ENCODE measurements at regions of chr3 and their contacts with region 1.

Region 1: DNA sequence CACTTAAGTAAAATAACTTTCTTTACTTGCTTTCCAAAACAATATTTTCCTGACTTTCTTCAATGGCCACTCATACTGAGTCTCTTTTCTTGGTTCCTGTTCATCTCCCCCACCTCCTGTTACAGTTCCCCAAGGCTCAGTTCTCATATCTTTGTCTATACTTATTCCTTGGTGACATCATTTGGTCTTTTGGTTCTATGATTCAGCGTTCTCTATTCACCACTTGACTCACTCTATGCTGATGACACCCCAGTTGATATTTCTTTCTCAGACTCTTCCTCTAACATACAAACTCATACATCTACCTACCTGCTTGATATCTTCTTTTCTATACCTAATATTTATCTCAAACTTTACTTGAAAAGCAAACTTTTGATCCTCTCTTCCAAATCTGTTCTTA is 85.0 kb upstream of the P3H2 start:
- DNase-seq: peak in 2 of 3 donors; percentile 13 to 17
- H3K4me3 ChIP-seq: no peak overlapping the region
- H3K27ac ChIP-seq: no peak overlapping the region
- H3K4me1 ChIP-seq: peaks cover 0 to 4% (median 0%) of the 10 kb centered on the region in 4 experiments
- H3K27me3 ChIP-seq: peaks cover 0 to 3% (median 1%) of the 10 kb centered on the region in 5 experiments

Region 2: GRCh38 chr3:189967254-189967865 is 238.4 kb before region 1 on chr3:
- CTCF ChIA-PET with region 1: interaction called, 26 read pairs
- POLR2A ChIA-PET with region 1: no interaction called
- DNase-seq: peak; percentile 47 to 74 (median 67)
- H3K4me3 ChIP-seq: no peak overlapping the region
- H3K27ac ChIP-seq: no peak overlapping the region
- H3K4me1 ChIP-seq: peaks cover 0 to 6% (median 0%) of the 10 kb centered on the region in 4 experiments
- H3K27me3 ChIP-seq: no peaks in the 10 kb centered on the region

Region 3: GRCh38 chr3:190026154-190026553 is 179.6 kb before region 1 on chr3:
- CTCF ChIA-PET with region 1: no interaction called
- POLR2A ChIA-PET with region 1: no interaction called
- DNase-seq: no peak
- H3K4me3 ChIP-seq: no peak overlapping the region
- H3K27ac ChIP-seq: no peak overlapping the region
- H3K4me1 ChIP-seq: peaks cover 0 to 6% (median 0%) of the 10 kb centered on the region in 4 experiments
- H3K27me3 ChIP-seq: no peaks in the 10 kb centered on the region

Region 4: GRCh38 chr3:190671658-190672057 is 465.9 kb after region 1 on chr3:
- CTCF ChIA-PET with region 1: no interaction called
- POLR2A ChIA-PET with region 1: no interaction called
- DNase-seq: no peak
- H3K4me3 ChIP-seq: no peak overlapping the region
- H3K27ac ChIP-seq: no peak overlapping the region
- H3K4me1 ChIP-seq: peaks cover 0 to 3% (median 0%) of the 10 kb centered on the region in 4 experiments
- H3K27me3 ChIP-seq: no peaks in the 10 kb centered on the region

Measured in common myeloid progenitor, CD34-positive (primary cell).